H1 (cell line): ENCODE measurements at regions of chr1 and their contacts with region 1.

Region 1: DNA sequence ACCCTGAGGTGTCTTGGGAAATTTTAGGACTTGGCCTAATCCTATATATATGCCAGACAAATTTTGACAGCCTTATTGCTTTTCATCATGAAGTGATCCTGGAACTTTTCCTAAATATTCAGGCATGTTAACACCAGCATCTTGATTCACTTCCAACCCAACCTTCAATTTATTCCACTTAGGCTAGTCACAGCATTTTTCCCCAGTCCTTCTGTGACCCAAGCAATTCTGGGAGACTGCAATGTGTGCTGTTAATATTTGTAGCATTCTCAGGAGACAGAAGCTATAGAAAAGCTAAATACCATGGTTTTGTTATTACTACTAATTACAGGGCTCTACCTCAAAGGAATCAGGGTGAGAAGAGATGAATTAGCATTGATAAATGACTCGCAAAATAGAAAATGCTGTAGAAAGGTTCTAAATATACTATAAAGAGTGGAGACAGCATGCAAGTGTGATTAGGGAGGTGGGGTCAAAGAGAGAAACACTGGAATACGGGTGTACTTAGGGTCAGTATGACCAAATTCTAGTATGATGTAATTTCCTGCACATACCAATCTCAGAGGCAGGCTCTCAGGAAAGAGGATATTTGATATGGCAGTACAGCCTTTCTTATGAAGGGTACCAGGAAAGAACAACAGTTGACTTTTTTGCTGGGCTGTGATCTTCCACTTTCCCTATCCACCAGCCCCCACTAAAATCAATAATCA is 29.1 kb downstream of the PRRX1 start:
- DNase-seq: no peak
- H3K4me3 ChIP-seq: no peak overlapping the region
- H3K27ac ChIP-seq: no peak overlapping the region
- H3K4me1 ChIP-seq: no peaks in the 10 kb centered on the region
- H3K27me3 ChIP-seq: no peaks in the 10 kb centered on the region
- CTCF ChIP-seq: no peak
- EP300 ChIP-seq: no peak
- POLR2A ChIP-seq: no peak
- RAD21 ChIP-seq: no peak

Region 2: DNA sequence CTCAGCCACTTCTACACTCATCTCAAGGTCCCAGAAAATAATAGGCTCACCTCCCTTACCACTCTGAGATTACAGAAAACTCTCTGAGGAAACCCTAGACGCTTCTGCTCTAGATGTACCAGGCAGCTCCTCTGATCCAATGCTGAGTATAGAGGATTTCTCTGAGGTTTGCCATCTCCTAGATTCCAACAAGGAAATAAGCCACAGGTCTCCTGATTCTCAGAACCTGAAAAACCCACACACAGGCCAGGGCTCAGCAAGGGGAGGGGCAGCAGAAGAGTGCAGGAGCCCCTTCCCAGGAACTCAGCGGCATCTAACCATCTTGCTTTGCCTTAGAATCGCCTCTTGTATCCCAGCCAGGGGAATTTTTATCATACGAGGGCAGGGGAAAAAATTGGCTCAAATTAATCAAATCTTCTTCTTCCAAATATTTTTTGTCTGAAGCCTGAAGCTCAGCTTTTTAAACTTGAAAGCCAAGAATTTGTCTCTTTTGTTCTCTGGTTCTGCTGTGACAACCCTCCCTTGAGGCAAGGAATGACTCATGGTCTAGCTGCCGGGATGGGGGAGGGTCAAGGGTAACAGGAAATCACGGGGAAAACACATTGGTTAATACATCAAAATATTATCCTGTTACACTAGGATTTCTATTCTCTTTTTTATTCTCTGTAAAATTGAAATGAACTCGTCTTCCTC is 130.2 kb before region 1 on chr1:
- CTCF ChIA-PET with region 1: no interaction called
- POLR2A ChIA-PET with region 1: no interaction called
- DNase-seq: peak in 1 of 2 experiments; percentile 23
- H3K4me3 ChIP-seq: peak overlapping the region in 1 of 4 experiments; percentile 13; a peak in 1 of 8 replicates
- H3K27ac ChIP-seq: 0 out of 2 replicates have a peak overlapping the region, but pooled peaks have one; percentile 22
- H3K4me1 ChIP-seq: peaks cover 5 to 10% (median 7%) of the 10 kb centered on the region in 4 experiments; a peak in 6 of 7 replicates
- H3K27me3 ChIP-seq: no peaks in the 10 kb centered on the region; a peak in 1 of 7 replicates
- CTCF ChIP-seq: no peak
- EP300 ChIP-seq: no peak
- POLR2A ChIP-seq: no peak
- RAD21 ChIP-seq: no peak

Region 3: DNA sequence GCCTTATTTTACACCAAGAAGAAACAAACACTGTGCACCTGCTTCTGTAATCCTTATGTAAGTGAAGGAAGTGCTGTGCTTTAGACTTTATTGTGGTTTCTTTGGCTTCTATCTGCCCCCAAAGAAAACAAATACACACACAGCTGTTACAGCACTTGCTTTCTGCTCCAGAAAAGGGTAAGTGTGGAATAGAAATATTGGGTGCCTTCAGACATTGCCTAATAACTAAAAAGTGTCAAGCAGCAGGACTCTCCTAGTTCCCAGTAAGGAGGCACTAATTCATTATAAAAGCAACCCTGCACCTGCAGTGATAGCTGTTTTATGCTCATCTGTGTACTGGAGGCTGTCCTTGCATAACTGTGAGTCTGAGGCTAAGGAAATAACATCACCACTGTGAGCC is 52.4 kb before region 1 on chr1:
- CTCF ChIA-PET with region 1: interaction called, 10 read pairs
- POLR2A ChIA-PET with region 1: no interaction called
- DNase-seq: no peak
- H3K4me3 ChIP-seq: no peak overlapping the region
- H3K27ac ChIP-seq: no peak overlapping the region
- H3K4me1 ChIP-seq: no peaks in the 10 kb centered on the region
- H3K27me3 ChIP-seq: no peaks in the 10 kb centered on the region
- CTCF ChIP-seq: no peak
- EP300 ChIP-seq: no peak
- POLR2A ChIP-seq: no peak
- RAD21 ChIP-seq: no peak

Region 4: DNA sequence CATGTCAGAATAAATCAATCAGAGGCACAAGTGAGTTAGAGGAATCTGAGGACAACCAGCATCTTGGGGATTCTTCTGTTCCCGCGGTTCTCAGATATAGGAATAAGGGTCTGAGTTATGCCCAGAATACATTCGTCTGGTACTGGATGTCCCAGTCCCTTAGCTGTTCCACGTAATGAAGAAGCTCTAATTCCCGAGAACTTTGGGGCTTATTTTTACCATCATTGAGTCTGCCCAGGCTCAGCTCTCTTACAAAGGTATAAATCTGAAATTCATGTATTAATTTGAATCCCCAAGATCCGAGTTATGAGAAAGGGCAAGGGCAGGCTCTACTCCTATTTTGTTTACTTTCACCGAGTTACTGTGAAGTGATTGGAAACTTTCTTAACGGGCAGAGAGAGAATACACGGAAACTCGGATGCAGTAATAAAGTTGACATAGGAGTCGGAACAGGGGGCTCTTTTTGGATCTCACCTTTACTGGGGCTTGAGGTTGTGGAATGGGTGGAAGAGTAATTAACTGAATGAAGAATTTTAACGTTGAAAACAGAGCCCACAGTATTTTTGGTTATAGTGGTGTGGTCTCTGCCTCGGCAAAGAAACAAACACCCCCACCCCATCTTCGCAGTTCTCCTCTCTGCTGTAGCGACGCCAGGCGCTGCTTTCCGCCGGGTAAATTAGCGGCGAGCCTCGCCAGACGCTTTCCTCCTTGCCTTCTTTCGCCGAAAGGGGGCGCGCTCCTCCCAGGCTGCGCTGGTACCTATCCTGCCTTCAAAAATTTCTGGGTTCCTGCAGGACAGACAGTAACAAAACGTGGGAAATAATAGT is 22.0 kb before region 1 on chr1:
- CTCF ChIA-PET with region 1: interaction called, 13 read pairs
- POLR2A ChIA-PET with region 1: no interaction called
- DNase-seq: peak in 1 of 2 experiments; percentile 96
- H3K4me3 ChIP-seq: peak overlapping the region in 1 of 4 experiments; percentile 41; a peak in 1 of 8 replicates
- H3K27ac ChIP-seq: no peak overlapping the region
- H3K4me1 ChIP-seq: peaks cover 2 to 13% (median 8%) of the 10 kb centered on the region in 4 experiments; a peak in 5 of 7 replicates
- H3K27me3 ChIP-seq: peaks cover 49 to 57% (median 57%) of the 10 kb centered on the region in 4 experiments
- CTCF ChIP-seq: peak; percentile 84 to 88 (median 86)
- EP300 ChIP-seq: no peak
- POLR2A ChIP-seq: no peak
- RAD21 ChIP-seq: peak; percentile 80 to 85

Region 5: DNA sequence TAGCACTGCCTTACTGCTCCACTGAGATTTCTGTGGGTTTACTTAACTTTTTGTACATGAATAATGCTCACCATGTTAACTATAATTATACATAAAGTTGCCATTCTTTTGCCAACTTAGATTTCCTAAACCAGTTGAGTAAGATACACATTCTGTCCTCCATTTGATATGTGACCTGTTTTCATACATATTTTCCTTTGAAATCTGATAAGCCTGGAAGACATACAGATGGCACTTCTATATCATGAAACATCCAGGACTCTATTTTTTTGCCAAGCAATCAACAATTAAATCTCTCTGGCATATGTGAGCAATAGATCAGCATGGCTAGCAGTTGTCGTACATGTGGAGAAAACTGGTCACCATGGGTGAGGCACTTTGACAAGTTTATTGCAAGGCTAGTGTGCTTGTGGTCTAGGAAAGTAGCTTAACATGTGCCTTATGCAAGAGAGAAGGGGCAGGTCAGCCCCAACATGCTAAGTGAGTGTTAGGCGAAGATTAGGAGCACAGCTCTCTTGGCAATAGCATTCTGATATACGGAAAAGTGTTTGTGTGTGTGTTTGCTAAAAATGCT is 14.9 kb before region 1 on chr1:
- CTCF ChIA-PET with region 1: interaction called, 16 read pairs
- POLR2A ChIA-PET with region 1: no interaction called
- DNase-seq: no peak
- H3K4me3 ChIP-seq: no peak overlapping the region
- H3K27ac ChIP-seq: no peak overlapping the region
- H3K4me1 ChIP-seq: no peaks in the 10 kb centered on the region
- H3K27me3 ChIP-seq: no peaks in the 10 kb centered on the region; a peak in 1 of 7 replicates
- CTCF ChIP-seq: no peak
- EP300 ChIP-seq: no peak
- POLR2A ChIP-seq: no peak
- RAD21 ChIP-seq: no peak

Region 6: GRCh38 chr1:170711682-170712081 is 18.7 kb after region 1 on chr1:
- CTCF ChIA-PET with region 1: interaction called, 17 read pairs
- POLR2A ChIA-PET with region 1: interaction called, 3 read pairs
- DNase-seq: no peak
- H3K4me3 ChIP-seq: no peak overlapping the region
- H3K27ac ChIP-seq: no peak overlapping the region
- H3K4me1 ChIP-seq: no peaks in the 10 kb centered on the region
- H3K27me3 ChIP-seq: no peaks in the 10 kb centered on the region
- CTCF ChIP-seq: no peak
- EP300 ChIP-seq: no peak
- POLR2A ChIP-seq: no peak
- RAD21 ChIP-seq: no peak

Region 7: GRCh38 chr1:170765712-170766330 is 72.8 kb after region 1 on chr1:
- CTCF ChIA-PET with region 1: interaction called, 17 read pairs
- POLR2A ChIA-PET with region 1: no interaction called
- DNase-seq: no peak
- H3K4me3 ChIP-seq: no peak overlapping the region
- H3K27ac ChIP-seq: no peak overlapping the region
- H3K4me1 ChIP-seq: no peaks in the 10 kb centered on the region
- H3K27me3 ChIP-seq: no peaks in the 10 kb centered on the region
- CTCF ChIP-seq: peak in 2 of 3 experiments; percentile 16 to 34; a peak in 1 of 4 replicates
- EP300 ChIP-seq: no peak
- POLR2A ChIP-seq: no peak
- RAD21 ChIP-seq: peak; percentile 52 to 63

Region 8: DNA sequence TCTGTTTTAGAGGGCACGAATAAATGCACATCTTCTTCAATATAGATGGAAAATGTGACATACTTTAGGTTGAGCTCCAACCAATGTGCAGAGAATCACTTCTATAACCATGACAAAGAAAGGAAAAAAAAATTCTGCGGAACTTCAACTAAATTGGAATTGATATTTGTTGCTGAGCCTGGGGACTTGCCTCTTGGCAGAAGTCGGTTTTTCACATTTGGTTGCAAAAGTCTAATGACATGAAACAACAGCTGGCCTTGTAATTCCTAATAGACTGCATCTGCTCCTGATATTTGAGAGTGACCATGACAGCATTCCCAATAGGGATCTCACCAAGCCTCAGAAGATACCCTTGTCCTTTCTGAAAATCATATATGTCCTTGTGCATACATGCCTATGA is 83.8 kb after region 1 on chr1:
- CTCF ChIA-PET with region 1: interaction called, 18 read pairs
- POLR2A ChIA-PET with region 1: no interaction called
- DNase-seq: no peak
- H3K4me3 ChIP-seq: no peak overlapping the region
- H3K27ac ChIP-seq: no peak overlapping the region
- H3K4me1 ChIP-seq: no peaks in the 10 kb centered on the region
- H3K27me3 ChIP-seq: no peaks in the 10 kb centered on the region
- CTCF ChIP-seq: no peak
- EP300 ChIP-seq: no peak
- POLR2A ChIP-seq: no peak
- RAD21 ChIP-seq: no peak